Prostate gland (tissue), 2 donors: ENCODE measurements at regions of chr2 and their contacts with region 1.

Region 1: GRCh38 chr2:29475499-29475898 is 360.3 kb downstream of the CLIP4 start:
- DNase-seq: no peak
- H3K4me3 ChIP-seq: no peak overlapping the region
- H3K27ac ChIP-seq: no peak overlapping the region
- H3K4me1 ChIP-seq: no peaks in the 10 kb centered on the region
- H3K27me3 ChIP-seq: no peaks in the 10 kb centered on the region
- CTCF ChIP-seq: no peak
- POLR2A ChIP-seq: no peak

Region 2: GRCh38 chr2:29532436-29532835 is 56.9 kb after region 1 on chr2:
- intact Hi-C with region 1: loop called (anchors 10 kb)
- DNase-seq: no peak
- H3K4me3 ChIP-seq: no peak overlapping the region
- H3K27ac ChIP-seq: no peak overlapping the region
- H3K4me1 ChIP-seq: no peaks in the 10 kb centered on the region
- H3K27me3 ChIP-seq: peaks cover 2% of the 10 kb centered on the region
- CTCF ChIP-seq: no peak
- POLR2A ChIP-seq: no peak